Activated naive CD4-positive, alpha-beta T cell treated with anti-CD3 and anti-CD28 coated beads, Interleukin-2, amount 10 ng/mL, durations not matched to agents 7 days and 5 days (primary cell): ENCODE measurements at regions of chr6 and their contacts with region 1.

Region 1: GRCh38 chr6:142551274-142551811 is 249.5 kb downstream of the ADGRG6 start:
- DNase-seq: peak; percentile 71
- H3K4me3 Mint-ChIP-seq: peak overlapping the region; percentile 14
- H3K27ac Mint-ChIP-seq: peak overlapping the region; percentile 77
- H3K4me1 Mint-ChIP-seq: peaks cover 47% of the 10 kb centered on the region
- H3K27me3 Mint-ChIP-seq: no peaks in the 10 kb centered on the region

Region 2: DNA sequence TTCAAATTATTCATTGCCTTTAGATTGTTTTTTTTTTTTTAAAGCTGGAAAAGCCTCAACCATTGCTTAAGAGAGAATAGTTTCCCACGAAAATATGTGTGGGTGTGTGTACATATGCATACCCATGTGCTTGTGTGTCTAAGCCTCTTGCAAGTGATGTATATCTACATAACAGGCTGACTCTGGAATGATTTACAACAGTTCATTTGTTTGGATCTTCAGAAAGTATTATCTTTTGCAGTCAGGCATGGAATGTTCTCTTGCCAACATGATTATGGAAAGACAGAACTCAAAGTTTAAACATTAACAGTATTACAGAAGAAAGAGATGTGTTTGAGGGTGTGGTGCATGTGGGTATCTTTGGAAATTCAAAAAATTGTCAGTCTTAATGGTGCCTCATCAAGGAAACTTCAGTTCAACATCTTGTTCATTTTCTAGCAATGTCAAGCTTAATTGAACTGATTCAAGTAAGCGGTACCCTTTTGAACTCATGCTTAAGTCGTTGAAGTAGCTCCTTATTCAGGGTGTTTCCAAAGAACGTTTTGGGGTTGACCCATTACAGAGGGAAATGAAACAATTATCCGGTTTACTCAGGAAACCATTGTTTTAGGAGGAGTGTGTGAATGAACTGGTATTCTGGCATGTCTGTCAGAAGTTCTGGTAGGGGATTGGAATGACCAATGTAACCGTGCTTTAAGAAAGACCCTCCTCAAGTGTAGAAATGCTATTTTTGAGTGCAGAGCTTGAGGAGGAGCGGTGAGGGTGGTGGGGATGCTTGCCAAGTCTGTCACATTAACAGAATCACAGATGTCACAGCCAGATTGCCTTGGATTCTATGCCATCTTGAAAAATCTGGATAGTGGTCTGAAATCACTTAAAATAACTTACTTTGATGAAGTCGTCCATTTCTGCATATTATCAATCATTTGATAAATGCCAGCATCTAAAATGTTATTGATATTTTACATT is 189.3 kb before region 1 on chr6:
- CTCF ChIA-PET with region 1: no interaction called
- DNase-seq: no peak
- H3K4me3 Mint-ChIP-seq: no peak overlapping the region
- H3K27ac Mint-ChIP-seq: no peak overlapping the region
- H3K4me1 Mint-ChIP-seq: no peaks in the 10 kb centered on the region
- H3K27me3 Mint-ChIP-seq: peaks cover 4% of the 10 kb centered on the region

Region 3: DNA sequence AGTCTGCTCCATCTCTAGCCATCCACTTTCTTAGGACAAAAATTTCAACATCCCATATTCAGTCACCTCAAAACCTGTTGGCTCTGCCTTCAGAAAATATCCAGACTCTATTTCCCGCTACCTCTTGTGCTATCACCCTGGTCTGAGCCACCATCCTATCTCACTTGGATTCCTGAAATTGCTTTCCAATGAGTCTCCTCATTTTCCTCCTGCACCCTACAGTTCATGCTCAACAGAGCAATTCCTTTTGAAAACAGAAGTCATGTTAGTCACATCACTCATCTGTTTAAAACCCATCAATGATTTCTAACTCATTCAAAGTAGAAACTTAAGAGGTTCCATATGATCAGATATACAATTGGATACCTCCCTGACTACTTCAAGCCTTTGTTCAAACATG is 19.6 kb before region 1 on chr6:
- CTCF ChIA-PET with region 1: no interaction called
- DNase-seq: no peak
- H3K4me3 Mint-ChIP-seq: no peak overlapping the region
- H3K27ac Mint-ChIP-seq: no peak overlapping the region
- H3K4me1 Mint-ChIP-seq: no peaks in the 10 kb centered on the region
- H3K27me3 Mint-ChIP-seq: peaks cover 5% of the 10 kb centered on the region

Region 4: DNA sequence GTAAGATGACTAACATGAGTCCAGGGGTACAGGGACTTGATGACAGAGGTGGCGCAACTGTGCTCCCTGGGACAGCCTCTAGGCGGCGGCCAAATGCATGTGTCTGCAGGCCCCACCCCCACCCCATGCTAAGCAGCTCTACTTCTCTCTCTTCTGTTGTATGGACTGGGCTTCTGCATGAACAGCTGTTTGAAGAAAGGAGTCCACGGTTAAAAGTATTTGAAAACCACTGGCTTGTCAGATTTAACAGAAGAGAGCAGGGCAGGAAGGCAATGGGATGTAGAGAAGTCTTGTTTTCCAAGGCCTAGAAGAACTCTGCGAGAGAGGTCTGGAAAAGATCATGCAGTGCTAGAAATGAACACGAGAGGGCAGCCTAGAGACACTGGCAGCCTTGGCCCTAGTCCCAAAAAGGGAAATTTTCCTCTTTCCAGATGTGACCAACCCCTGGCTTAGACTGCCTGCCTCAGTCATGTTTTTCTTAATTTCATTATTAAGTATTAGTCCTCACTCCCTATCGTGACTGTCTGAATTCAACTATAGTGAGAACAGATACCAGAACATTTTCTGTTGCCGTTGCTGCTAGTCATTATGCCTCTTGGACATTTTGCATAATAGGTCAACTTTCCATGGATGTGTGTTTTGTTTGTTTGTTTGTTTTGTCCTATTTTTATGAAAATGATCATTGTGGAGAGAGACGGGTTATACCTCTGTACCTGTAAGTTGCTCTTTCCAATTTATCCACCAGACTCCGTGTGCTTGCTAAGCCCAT is 15.5 kb after region 1 on chr6:
- CTCF ChIA-PET with region 1: interaction called, 20 read pairs
- DNase-seq: peak; percentile 66
- H3K4me3 Mint-ChIP-seq: no peak overlapping the region
- H3K27ac Mint-ChIP-seq: no peak overlapping the region
- H3K4me1 Mint-ChIP-seq: peaks cover 66% of the 10 kb centered on the region
- H3K27me3 Mint-ChIP-seq: no peaks in the 10 kb centered on the region